ENCODE measurements at regions of chr4 and their contacts with region 1.

Region 1: DNA sequence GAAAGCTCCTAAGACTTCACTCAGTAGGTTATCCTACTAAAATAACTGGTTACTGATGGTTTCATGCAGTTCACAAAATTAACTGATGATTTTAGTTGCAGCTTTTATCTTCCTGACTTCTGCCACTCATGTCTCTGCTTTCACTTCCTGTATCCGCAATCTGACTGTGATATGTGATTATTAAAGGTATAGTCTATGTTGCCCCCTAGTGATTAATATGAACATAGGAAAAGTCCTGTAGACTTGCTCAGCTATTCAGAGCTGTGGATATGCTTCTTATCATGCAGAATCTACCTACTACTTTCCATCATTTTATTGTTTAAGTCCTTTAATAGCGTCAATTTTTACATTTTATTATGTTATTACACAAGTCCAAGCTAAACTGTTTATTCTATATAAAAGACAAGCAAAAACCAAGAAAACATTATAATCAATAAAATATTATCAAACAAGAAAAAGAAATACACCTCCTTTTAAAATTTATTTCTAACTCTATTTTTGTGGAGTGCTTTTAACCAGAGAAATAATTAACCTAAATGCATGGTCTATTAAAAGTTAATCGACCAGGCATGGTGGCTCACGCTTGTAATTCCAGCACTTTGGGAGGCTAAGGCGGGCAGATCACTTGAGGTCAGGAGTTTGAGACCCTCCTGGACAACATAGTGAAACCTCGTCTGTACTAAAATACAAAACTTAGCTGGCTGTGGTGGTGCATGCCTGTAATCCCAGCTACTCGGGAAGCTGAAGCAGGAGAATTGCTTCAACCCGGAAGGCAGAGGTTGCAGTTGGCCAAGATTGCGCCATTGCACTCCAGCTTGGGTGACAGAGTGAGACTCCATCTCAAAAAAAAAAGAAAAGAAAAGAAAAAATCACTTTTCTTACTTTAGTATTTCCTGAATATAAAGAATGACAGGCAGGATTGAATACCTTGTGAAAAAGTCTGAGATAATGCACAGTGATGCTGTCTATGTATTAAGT is 40.4 kb upstream of the TLR2 start:
- DNase-seq: peak; percentile 46
- ATAC-seq: peak; percentile 90
- H3K4me3 ChIP-seq: no peak overlapping the region
- H3K27ac ChIP-seq: no peak overlapping the region
- H3K4me1 ChIP-seq: 0 out of 4 replicates have a peak, but pooled peaks cover 0 to 5% of the 10 kb centered on the region in 2 experiments
- H3K27me3 ChIP-seq: no peaks in the 10 kb centered on the region
- CTCF ChIP-seq: peak; percentile 32 to 71 (median 63); a peak in 5 of 6 replicates
- POLR2A ChIP-seq: no peak
- RAD21 ChIP-seq: peak; percentile 75

Region 2: GRCh38 chr4:152591396-152591795 is 1052.3 kb before region 1 on chr4:
- CTCF ChIA-PET with region 1: no interaction called
- POLR2A ChIA-PET with region 1: no interaction called
- RAD21 ChIA-PET with region 1: no interaction called
- intact Hi-C with region 1: no loop called
- DNase-seq: no peak
- ATAC-seq: no peak
- H3K4me3 ChIP-seq: no peak overlapping the region
- H3K27ac ChIP-seq: no peak overlapping the region
- H3K4me1 ChIP-seq: no peaks in the 10 kb centered on the region
- H3K27me3 ChIP-seq: no peaks in the 10 kb centered on the region
- CTCF ChIP-seq: no peak
- POLR2A ChIP-seq: no peak
- RAD21 ChIP-seq: no peak

Region 3: DNA sequence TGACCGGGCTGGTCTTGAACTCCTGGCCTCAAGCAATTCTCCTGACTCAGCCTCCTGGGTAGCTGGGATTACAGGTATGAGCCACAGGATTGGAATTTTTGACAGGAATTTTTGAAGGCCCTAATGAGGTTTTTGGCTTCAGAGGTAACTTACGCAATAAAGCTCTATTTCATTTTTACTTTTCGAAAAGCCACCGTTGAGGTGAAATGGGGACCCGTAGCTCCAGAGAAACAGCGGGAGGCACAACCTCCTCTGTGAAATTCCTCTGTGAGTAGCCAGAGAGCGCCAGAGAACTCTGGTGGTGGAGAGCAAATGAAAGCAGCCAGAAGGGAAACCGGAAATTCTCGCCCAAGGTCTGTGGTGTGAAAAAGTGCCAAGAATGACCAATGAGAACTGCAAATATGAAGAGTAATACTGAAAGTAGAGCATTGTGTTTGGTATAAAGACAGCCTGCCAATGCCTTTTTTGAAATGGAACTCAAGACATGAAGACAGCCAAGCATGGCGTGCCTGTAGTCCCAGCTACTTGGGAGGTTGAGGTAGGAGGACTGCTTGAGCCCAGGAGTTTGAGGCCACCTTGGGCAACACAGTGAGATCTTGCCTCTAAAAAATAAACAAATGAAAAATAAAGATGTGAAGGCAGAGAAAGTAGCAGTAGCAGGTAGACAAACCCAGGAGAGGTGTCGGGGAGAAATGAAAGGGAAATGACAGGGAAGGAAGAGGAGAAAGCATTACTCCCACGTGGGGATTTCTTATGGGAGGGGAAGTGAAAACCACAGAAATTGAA is 210.5 kb before region 1 on chr4:
- CTCF ChIA-PET with region 1: no interaction called
- POLR2A ChIA-PET with region 1: no interaction called
- RAD21 ChIA-PET with region 1: no interaction called
- intact Hi-C with region 1: loop called (anchors 2 kb)
- DNase-seq: peak; percentile 77
- ATAC-seq: peak; percentile 90
- H3K4me3 ChIP-seq: peak overlapping the region in 1 of 2 experiments; percentile 32; a peak in 2 of 4 replicates
- H3K27ac ChIP-seq: peak overlapping the region; percentile 44; the same call in 1 of the 2 replicates
- H3K4me1 ChIP-seq: peaks cover 14 to 19% of the 10 kb centered on the region in 2 experiments
- H3K27me3 ChIP-seq: no peaks in the 10 kb centered on the region
- CTCF ChIP-seq: peak; percentile 75 to 92 (median 85)
- POLR2A ChIP-seq: no peak
- RAD21 ChIP-seq: peak; percentile 98

Region 4: GRCh38 chr4:153555730-153556433 is 87.8 kb before region 1 on chr4:
- CTCF ChIA-PET with region 1: no interaction called
- POLR2A ChIA-PET with region 1: no interaction called
- RAD21 ChIA-PET with region 1: no interaction called
- intact Hi-C with region 1: no loop called
- DNase-seq: no peak
- ATAC-seq: no peak
- H3K4me3 ChIP-seq: no peak overlapping the region
- H3K27ac ChIP-seq: no peak overlapping the region
- H3K4me1 ChIP-seq: 0 out of 4 replicates have a peak, but pooled peaks cover 0 to 2% of the 10 kb centered on the region in 2 experiments
- H3K27me3 ChIP-seq: no peaks in the 10 kb centered on the region
- CTCF ChIP-seq: no peak
- POLR2A ChIP-seq: no peak
- RAD21 ChIP-seq: no peak

Region 5: GRCh38 chr4:153873741-153874140 is 230.0 kb after region 1 on chr4:
- CTCF ChIA-PET with region 1: no interaction called
- POLR2A ChIA-PET with region 1: no interaction called
- RAD21 ChIA-PET with region 1: no interaction called
- intact Hi-C with region 1: no loop called
- DNase-seq: no peak
- ATAC-seq: no peak
- H3K4me3 ChIP-seq: no peak overlapping the region
- H3K27ac ChIP-seq: no peak overlapping the region
- H3K4me1 ChIP-seq: no peaks in the 10 kb centered on the region
- H3K27me3 ChIP-seq: no peaks in the 10 kb centered on the region
- CTCF ChIP-seq: no peak
- POLR2A ChIP-seq: no peak
- RAD21 ChIP-seq: no peak

Region 6: DNA sequence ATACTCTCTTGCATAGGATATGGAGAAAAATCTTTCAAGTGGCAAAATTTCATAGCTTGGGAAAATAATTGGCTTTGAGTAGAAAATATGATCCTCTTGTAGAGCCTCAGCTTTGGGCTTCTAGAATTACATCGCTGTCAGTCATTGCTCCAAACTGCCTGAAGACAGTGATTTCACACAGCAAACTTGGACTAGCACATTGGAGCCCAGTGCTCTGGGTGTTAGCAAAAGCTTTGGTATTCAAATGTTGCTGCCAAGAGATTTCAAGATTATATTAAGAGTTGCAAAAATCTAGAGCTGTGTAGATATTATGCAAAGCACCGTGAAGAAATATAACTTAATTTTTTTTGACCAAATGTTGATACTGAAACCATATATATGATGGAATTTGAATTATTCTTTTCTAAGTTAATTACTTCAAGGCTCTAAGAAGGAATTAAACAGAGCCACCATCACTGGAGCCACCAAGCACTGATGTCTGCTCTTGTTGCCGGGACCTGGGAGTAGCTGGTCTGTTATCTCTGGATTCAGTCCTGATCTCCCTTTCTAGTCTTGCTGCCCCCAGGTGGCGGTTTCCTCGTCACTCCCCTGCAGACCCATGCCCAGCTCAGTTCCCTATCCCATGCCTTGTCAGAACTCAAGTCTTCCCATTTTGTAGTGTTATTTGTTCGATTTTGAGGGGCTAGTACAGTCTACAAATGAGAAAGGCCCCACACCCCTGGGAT is 405.9 kb after region 1 on chr4:
- CTCF ChIA-PET with region 1: no interaction called
- POLR2A ChIA-PET with region 1: no interaction called
- RAD21 ChIA-PET with region 1: no interaction called
- intact Hi-C with region 1: no loop called
- DNase-seq: peak; percentile 16
- ATAC-seq: peak; percentile 79
- H3K4me3 ChIP-seq: no peak overlapping the region
- H3K27ac ChIP-seq: no peak overlapping the region
- H3K4me1 ChIP-seq: no peaks in the 10 kb centered on the region
- H3K27me3 ChIP-seq: no peaks in the 10 kb centered on the region
- CTCF ChIP-seq: peak; percentile 4 to 51 (median 35); a peak in 3 of 6 replicates
- POLR2A ChIP-seq: no peak
- RAD21 ChIP-seq: peak; percentile 25; the same call in 1 of the 2 replicates

Measured in HCT116 (cell line).